AG04449 (cell line): ENCODE measurements at regions of chr19 and their contacts with region 1.

Region 1: DNA sequence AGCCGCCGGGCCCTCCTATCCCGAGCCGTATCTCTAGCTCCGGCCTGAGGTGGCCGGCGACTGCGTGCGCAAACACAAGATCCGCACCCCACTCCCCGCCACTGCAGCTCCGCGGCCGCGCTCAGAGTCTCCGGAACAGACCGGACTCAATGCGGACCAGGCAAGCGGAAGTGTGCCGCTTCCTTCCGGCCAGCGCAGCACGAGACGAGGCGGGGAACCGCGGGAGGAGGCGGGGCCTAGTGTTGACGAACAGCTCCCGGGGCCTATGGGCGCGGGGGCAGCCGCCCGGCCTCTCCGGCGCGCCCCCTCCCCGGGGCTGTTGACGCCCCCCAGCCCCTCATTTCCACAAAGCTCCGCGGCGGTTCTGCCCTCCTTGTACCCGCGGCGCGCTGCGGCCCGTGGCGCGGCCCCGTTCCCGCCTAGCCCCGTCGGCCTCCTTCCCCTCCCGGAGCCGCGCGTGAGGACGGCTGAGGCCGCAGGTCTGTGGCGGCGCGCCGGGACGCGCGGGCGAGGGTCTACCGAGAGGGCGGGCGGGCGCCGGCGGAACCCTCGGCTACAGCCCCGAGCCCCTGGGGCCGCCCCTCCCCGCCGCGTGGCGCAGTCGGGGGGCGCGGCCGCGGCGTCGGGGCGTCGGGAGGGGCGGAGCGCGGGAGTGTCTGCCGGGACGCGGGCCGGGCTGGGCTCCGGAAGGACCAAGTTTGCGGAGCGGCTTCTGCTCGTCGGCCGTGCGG is at the start of gene DPY19L3:
- DNase-seq: peak; percentile 69
- H3K4me3 ChIP-seq: peak within 1 kb of the TSS; percentile 91
- CTCF ChIP-seq: no peak

Region 2: DNA sequence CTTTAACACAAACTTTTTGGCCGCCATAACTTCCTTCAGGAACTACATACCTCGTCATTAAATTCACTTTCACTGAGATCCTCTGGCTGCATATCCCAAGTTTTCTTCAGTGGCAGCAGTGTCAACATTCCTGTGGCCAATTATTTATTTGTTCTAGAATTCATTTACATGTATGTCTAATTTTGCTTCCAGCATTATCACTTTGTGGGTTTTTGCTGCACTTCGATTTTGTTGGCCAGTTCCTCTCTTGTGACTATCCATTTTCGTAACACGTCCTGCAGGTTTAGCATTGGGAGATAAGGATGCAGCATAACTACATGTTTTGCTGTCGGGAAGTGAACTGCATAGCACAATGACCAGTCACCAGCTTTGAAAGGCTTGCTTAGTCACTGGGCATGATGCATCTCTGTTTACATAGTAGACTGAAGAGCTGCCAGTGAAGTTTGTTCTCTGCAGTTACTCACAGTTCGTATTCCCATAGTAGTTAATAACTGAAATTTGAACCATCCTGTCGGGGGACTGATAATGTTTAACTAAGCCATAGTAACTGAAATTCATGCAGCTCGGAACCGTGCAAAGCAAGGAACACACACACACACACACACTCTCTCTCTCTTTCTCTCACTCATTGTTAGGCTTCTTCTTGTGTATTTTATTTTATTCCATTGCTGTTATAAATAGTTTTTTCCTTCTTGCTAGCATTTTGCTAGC is 31.9 kb before region 1 on chr19:
- CTCF ChIA-PET with region 1: no interaction called
- POLR2A ChIA-PET with region 1: interaction called, 12 read pairs
- DNase-seq: peak; percentile 98
- H3K4me3 ChIP-seq: peak overlapping the region; percentile 32
- CTCF ChIP-seq: no peak

Region 3: GRCh38 chr19:32387701-32388392 is 17.7 kb before region 1 on chr19:
- CTCF ChIA-PET with region 1: interaction called, 3 read pairs
- POLR2A ChIA-PET with region 1: interaction called, 11 read pairs
- DNase-seq: no peak
- H3K4me3 ChIP-seq: no peak overlapping the region
- CTCF ChIP-seq: no peak